HEK293 (cell line): ENCODE measurements at regions of chr3 and their contacts with region 1.

Region 1: GRCh38 chr3:4633078-4634004 is 140.2 kb downstream of the ITPR1 start:
- H3K4me3 ChIP-seq: no peak overlapping the region
- H3K27ac ChIP-seq: no peak overlapping the region
- H3K4me1 ChIP-seq: no peaks in the 10 kb centered on the region
- CTCF ChIP-seq: peak; percentile 54; the same call in 1 of the 2 replicates

Region 2: DNA sequence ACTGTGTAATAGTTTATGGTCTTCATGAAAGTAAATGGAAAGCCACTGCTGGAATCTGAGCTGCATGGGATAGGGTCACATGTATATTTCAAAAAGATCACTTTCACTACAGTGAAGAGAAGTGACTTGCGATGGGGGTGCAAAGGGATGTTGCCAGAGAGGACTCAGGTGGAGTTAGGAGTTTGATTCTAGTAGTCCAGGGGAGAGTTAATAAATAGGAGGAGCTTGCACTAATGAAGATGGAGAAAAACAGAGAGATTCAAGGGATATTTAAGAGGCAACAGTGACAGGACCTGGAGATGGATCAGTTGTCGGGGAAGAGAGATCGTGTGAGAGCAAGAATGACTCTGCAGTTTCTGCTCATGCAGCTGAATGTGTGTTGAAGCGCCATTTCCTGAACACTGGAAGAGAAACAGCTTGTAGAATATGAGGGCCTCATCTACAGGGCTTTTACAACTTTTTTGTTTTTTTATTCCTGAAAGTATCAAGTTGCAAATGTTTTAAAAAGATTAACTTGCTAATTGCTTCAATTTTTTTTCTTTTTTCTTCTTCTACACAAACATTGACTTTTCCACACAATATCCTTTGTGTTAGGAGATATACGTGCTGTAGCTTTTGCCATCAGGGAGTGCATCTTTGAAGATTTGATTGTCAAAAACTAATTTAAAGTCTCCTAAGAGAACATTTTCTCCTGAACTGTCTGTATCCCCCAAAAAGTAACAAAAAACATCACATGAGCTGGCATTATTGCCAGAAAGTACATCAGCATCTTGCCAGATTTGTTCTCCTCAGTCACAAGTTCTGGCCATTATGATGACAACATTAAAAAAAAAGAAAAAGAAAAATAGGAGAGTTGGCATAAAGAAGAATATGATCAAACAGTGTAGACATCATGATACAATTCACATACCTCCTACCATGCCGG is 292.7 kb before region 1 on chr3:
- CTCF ChIA-PET with region 1: interaction called, 19 read pairs
- POLR2A ChIA-PET with region 1: no interaction called
- H3K4me3 ChIP-seq: no peak overlapping the region
- H3K27ac ChIP-seq: no peak overlapping the region
- H3K4me1 ChIP-seq: peaks cover 3% of the 10 kb centered on the region; the same call in 1 of the 2 replicates
- CTCF ChIP-seq: no peak

Region 3: GRCh38 chr3:4350789-4351163 is 282.6 kb before region 1 on chr3:
- CTCF ChIA-PET with region 1: interaction called, 138 read pairs
- POLR2A ChIA-PET with region 1: interaction called, 3 read pairs
- H3K4me3 ChIP-seq: no peak overlapping the region
- H3K27ac ChIP-seq: no peak overlapping the region
- H3K4me1 ChIP-seq: peaks cover 3% of the 10 kb centered on the region; the same call in 1 of the 2 replicates
- CTCF ChIP-seq: peak; percentile 76

Region 4: GRCh38 chr3:4356546-4357410 is 276.6 kb before region 1 on chr3:
- CTCF ChIA-PET with region 1: interaction called, 138 read pairs
- POLR2A ChIA-PET with region 1: no interaction called
- H3K4me3 ChIP-seq: no peak overlapping the region
- H3K27ac ChIP-seq: no peak overlapping the region
- H3K4me1 ChIP-seq: peaks cover 6% of the 10 kb centered on the region; the same call in 1 of the 2 replicates
- CTCF ChIP-seq: no peak

Region 5: GRCh38 chr3:4493014-4493940 is 140.1 kb before region 1 on chr3 and contains the start of gene ITPR1:
- CTCF ChIA-PET with region 1: interaction called, 16 read pairs
- POLR2A ChIA-PET with region 1: no interaction called
- H3K4me3 ChIP-seq: peak within 1 kb of the TSS; percentile 71
- H3K27ac ChIP-seq: peak within 1 kb of the TSS; percentile 83
- H3K4me1 ChIP-seq: peaks cover 13% of the 10 kb centered on the region
- CTCF ChIP-seq: peak; percentile 47; the same call in 1 of the 2 replicates

Region 6: DNA sequence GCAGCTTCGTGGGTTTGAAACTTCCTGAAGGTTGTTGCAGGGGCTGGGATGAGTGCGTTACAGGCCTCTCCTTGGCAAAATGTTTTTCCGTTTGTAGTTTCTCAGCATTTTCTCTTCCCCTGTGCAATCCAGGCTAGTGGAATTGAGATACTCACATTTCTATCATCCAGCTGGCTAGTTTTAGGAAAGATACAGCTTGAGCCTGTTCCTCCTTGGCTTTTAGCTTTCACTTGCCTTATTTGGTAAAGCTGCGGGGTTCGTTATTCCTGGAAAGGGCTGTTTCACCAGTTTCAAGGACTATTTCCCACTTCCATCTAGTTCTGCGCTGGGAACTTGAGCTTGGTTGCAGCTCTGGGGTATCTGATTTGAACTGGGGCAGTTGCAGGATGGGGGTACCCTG is 49.9 kb before region 1 on chr3:
- CTCF ChIA-PET with region 1: interaction called, 10 read pairs
- POLR2A ChIA-PET with region 1: no interaction called
- H3K4me3 ChIP-seq: no peak overlapping the region
- H3K27ac ChIP-seq: no peak overlapping the region
- H3K4me1 ChIP-seq: no peaks in the 10 kb centered on the region
- CTCF ChIP-seq: no peak

Region 7: DNA sequence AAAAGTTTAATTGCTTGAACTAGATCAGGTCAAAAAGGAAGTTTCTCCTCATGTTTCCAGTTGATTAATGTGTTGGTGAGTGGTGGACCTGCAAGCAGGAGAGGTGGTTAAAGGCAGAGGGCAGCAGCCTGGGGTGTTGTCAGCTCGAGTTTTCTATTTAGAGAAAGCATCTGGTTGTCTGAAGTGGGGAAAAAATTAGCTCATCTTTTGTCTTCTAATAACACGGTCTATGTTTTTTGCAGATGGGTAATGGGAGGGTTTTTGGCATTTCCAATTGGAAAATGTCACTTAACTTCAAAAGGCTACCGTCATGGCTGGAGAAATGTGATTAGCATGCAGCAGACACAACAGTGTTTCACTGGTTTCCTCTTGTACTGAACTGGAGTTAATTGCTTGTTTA is 17.6 kb before region 1 on chr3:
- CTCF ChIA-PET with region 1: interaction called, 15 read pairs
- POLR2A ChIA-PET with region 1: no interaction called
- H3K4me3 ChIP-seq: no peak overlapping the region
- H3K27ac ChIP-seq: no peak overlapping the region
- H3K4me1 ChIP-seq: no peaks in the 10 kb centered on the region
- CTCF ChIP-seq: no peak

Region 8: GRCh38 chr3:4660936-4661335 is 27.6 kb after region 1 on chr3:
- CTCF ChIA-PET with region 1: no interaction called
- POLR2A ChIA-PET with region 1: no interaction called
- H3K4me3 ChIP-seq: no peak overlapping the region
- H3K27ac ChIP-seq: no peak overlapping the region
- H3K4me1 ChIP-seq: no peaks in the 10 kb centered on the region
- CTCF ChIP-seq: no peak